Dendritic cell treated with granulocyte-macrophage colony-stimulating factor and Interleukin-4, amounts not matched to agents 40 ng/mL and 50 ng/mL, for 4 days (primary cell): ENCODE measurements at regions of chr15 and their contacts with region 1.

Region 1: DNA sequence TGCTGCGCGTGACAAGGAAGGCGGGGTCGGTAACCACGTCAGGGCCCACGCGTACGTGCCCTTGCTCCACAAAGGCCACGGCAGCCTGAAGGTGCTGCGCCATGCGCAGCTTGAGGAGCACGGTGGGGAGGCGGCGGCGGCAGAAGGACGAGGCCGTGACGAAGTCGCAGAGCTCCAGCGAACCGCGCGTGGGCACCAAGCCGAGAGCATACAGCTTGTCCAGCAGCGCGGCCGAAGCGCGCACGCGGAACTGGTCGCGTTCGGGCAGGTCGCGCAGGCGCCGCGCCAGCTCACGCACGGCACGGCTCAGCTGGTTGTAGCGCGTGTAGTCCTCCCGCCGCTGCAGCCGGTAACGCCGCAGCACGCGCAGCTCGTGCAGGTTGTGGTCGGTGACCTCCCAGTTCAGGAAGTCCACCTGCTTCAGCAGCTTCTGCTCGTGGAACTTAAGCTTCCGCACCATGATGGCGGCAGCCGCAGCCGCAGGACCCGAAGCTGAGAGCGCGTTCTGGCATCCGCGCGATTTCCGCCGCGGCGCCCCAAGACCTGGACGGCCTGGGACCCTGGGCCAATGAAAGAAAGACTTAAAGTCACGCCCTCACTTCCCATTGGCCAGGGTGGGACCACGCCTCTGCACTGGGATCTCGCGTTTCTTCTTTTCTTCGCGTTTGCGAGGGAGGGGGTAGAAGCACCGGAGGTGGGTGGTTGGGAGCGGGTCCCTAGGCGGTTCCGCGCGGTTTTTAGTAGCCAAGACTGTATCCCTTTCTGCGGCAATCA is at the start of gene IMP3:
- H3K4me3 Mint-ChIP-seq: peak within 1 kb of the TSS; percentile 90
- H3K27ac Mint-ChIP-seq: peak within 1 kb of the TSS; percentile 97
- H3K4me1 Mint-ChIP-seq: peaks cover 32% of the 10 kb centered on the region
- H3K27me3 Mint-ChIP-seq: peaks cover 6% of the 10 kb centered on the region

Region 2: GRCh38 chr15:75367913-75368688 is 271.8 kb before region 1 on chr15 and contains the start of gene MAN2C1:
- intact Hi-C with region 1: loop called (anchors 5 kb)
- H3K4me3 Mint-ChIP-seq: peak within 1 kb of the TSS; percentile 85
- H3K27ac Mint-ChIP-seq: peak within 1 kb of the TSS; percentile 97
- H3K4me1 Mint-ChIP-seq: peaks cover 23% of the 10 kb centered on the region
- H3K27me3 Mint-ChIP-seq: no peaks in the 10 kb centered on the region

Region 3: GRCh38 chr15:75625542-75626347 is 14.2 kb before region 1 on chr15 and contains the start of gene SNUPN:
- intact Hi-C with region 1: loop called (anchors 2 kb)
- H3K4me3 Mint-ChIP-seq: peak within 1 kb of the TSS; percentile 99
- H3K27ac Mint-ChIP-seq: peak within 1 kb of the TSS; percentile 100
- H3K4me1 Mint-ChIP-seq: peaks cover 33% of the 10 kb centered on the region
- H3K27me3 Mint-ChIP-seq: no peaks in the 10 kb centered on the region